ENCODE measurements at regions of chr1 and their contacts with region 1.

Region 1: DNA sequence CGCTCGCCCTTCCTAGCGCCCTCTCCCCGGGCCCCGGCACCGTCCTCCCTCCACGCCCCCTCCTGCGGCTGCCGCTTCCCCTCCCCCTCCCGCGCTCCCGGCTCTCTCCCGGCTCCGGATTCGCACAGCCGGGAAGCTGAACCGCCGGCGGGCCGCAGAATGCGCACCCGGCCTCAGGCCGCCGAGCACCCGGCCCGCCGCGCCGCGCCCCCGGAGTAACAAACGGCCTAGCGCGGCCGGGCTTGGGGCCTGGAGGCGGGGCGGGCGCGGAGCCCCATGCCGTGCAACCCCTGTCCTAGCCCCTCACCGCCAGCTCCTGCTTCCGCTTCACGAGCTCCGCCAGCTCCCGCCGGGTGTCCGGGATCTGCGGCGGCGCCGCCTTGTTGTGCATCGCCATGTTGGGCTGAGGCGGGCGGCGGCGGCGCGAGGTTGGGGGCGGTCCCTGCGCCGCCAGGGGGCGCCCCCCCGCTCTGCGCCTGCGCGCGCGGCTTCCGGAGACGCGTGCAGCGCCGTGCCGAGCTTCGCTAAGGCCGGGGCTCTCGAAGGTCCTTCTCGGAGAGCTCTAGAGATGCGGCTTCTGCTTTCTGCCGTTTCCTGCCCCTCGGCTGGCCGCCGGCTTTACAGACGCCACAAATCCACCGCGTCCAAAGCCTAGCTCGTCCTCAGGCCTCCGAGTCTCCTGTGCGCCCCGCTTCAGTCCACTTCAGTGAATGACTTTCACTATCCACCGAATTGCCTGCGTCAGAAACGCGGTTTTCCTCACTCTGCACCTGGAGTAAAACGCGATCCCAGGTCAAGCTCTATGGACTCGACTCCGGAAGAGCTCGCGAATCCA is at the start of gene MEAF6:
- DNase-seq: peak; percentile 58 to 86
- H3K4me3 ChIP-seq: peak within 1 kb of the TSS; percentile 95
- H3K27ac ChIP-seq: peak within 1 kb of the TSS; percentile 77
- H3K4me1 ChIP-seq: peaks cover 17% of the 10 kb centered on the region
- H3K27me3 ChIP-seq: no peaks in the 10 kb centered on the region
- CTCF ChIP-seq: peak; percentile 63
- total RNA-seq, gene MEAF6: 72.3 and 88.7 TPM in 2 replicates

Region 2: DNA sequence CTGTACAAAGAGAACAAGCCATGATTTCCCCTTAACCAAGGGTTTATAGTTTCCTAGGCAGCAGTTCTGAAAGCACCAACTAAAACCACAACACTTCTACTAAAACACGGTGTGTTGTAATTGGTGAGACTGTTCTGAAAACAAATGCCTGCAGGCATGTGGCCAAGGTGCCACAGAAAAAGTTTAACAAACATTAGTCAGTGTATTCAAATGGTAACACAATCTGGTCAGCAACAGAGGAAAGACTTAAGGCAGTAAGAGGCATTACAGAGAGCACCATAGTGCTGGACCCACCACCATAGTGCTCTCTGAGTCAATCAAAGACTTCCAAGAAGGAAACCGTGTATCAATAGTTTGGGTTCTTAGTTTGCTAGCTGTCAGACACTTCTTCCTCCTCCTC is 22.8 kb after region 1 on chr1:
- CTCF ChIA-PET with region 1: interaction called, 3 read pairs
- POLR2A ChIA-PET with region 1: interaction called, 16 read pairs
- intact Hi-C with region 1: loop called (anchors 1 kb)
- DNase-seq: peak; percentile 51 to 87
- H3K4me3 ChIP-seq: no peak overlapping the region
- H3K27ac ChIP-seq: peak overlapping the region; percentile 40
- H3K4me1 ChIP-seq: peaks cover 48% of the 10 kb centered on the region
- H3K27me3 ChIP-seq: no peaks in the 10 kb centered on the region
- CTCF ChIP-seq: no peak

Region 3: GRCh38 chr1:37553927-37554808 is 39.6 kb after region 1 on chr1 and contains the start of gene SNIP1:
- CTCF ChIA-PET with region 1: interaction called, 5 read pairs
- POLR2A ChIA-PET with region 1: no interaction called
- intact Hi-C with region 1: loop called (anchors 2 kb)
- DNase-seq: peak; percentile 89 to 90
- H3K4me3 ChIP-seq: peak within 1 kb of the TSS; percentile 78
- H3K27ac ChIP-seq: peak within 1 kb of the TSS; percentile 41; the same call in 1 of the 2 replicates
- H3K4me1 ChIP-seq: peaks cover 16% of the 10 kb centered on the region
- H3K27me3 ChIP-seq: no peaks in the 10 kb centered on the region
- CTCF ChIP-seq: no peak
- total RNA-seq, gene SNIP1: 23.5 and 32.5 TPM in 2 replicates

Measured in PC-9 (cell line).